HEK293 (cell line): ENCODE measurements at regions of chr2 and their contacts with region 1.

Region 1: DNA sequence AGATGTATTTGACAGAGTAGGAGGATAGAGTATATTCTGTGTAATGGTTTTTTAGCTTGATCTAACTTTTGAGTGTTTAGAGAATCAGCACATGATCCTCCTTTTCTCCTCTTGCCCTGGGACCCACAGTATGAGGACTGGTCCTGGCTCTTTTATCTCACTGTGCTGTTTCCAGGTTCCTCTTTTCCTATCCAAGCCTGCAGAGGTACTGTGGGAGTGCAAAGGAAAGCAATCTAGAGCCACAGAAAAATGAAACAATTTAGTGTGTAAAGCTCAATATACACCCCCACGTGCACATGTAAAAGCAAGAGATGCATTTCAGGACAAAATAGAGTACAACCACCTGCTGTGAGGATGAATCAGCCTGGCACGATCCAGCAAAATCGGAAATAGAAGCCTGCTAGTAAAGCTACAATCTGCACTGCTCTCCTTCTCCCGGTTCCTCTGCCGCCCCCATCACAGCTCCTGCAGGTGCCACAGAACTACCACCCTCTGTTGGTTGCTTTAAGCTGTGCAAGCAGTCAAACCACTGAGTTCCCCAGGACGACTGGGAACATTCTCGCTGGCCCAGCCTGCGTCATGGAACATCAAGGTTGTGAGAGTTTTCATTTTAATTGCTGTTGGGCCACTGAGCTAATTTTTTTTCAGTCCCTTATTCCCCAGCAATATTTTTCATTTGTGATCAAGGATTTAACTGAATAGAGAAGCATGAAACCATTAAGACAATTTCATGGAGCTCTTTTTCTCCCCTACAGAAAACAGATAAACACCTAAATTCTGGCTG is 47.8 kb upstream of the MAPRE3 start:
- H3K4me3 ChIP-seq: no peak overlapping the region
- H3K27ac ChIP-seq: no peak overlapping the region
- H3K4me1 ChIP-seq: peaks cover 5% of the 10 kb centered on the region
- CTCF ChIP-seq: peak; percentile 83

Region 2: DNA sequence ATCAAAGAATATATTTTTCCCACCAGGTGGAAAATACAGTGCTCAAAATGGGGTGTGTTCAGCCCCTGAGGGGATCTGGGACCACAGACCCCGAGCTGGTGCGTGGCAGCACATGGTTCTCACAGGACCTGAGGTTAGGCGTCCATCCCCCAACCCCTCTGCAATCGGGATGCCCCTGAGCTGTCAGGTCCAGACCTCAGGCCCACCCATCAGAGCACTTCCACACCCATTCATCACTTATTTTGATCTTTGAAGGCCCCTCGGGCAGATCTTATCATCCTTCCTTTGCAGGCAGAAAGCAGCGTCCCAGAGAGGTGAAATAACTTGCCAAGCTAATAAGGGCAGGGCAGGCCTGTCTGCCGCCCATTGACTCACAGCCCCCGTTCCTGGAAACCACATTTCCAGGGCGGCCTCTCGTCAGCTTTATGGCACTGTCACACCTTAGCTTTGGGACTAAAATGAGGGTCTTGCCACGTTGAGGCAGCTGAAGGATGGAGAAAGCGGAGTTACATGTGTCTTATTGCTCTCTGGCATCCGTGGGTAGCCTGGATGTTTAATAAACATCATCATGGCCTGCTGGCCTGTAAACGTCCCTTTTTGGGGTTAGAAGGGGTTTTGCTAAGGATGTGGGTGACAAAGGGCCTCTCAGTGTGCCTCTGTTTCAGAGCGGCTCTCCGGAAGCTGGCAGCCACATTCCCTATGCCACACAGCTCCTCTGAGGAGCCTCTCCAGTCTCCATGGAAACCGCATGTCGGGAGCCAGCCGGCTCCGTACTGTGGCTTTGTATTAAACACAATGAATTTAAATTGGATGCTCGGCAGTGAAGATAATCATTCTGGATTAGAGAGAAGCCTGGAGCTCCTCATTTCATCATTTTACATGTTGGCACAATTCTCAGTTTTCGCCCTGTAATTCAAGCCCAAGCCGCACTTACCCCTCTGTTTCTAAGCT is 10.4 kb before region 1 on chr2:
- CTCF ChIA-PET with region 1: interaction called, 28 read pairs
- POLR2A ChIA-PET with region 1: no interaction called
- H3K4me3 ChIP-seq: no peak overlapping the region
- H3K27ac ChIP-seq: no peak overlapping the region
- H3K4me1 ChIP-seq: no peaks in the 10 kb centered on the region
- CTCF ChIP-seq: no peak

Region 3: DNA sequence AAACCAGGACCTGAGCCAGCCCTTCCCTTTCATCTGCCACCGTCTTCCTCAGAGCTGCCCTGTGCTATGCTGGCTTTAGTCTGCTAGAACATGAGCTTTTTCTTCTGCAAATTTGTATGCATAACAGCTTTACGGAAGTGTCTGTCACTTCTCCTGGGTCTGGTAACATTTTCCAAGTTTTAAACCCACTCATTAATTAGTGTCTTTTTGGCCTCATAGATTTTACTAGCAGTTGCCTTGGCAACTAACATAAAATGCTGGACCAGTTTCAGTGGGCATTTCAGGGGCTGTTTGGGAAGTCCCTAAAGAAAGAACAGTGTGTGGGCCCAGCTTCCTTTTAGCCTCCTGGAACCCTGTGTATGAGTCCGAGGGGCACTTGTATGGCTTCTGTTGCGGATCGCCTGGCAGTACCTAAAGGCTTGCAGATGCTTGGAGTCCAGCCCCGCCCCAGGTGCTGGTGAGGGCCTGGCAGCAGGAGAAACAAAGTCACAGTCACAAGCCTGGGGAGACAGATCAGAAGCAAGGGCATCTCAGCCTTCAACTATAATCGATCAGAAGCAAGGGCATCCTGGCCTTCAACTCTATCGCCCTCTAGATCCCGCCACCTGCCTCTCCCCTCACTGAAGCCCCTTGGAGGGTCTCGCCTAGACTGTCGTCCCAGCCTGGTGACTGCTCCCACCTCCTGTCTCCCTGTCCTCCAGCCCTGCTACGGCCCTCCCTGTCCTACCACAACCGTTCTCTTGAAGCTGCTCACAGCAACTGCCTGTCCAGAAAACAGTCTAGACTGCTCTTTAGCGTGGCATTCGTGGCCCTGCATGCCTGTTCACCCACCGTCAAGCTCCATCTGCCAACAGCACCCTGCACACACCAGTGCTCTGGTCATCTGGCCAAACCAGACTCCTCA is 11.1 kb after region 1 on chr2:
- CTCF ChIA-PET with region 1: interaction called, 21 read pairs
- POLR2A ChIA-PET with region 1: no interaction called
- H3K4me3 ChIP-seq: no peak overlapping the region
- H3K27ac ChIP-seq: no peak overlapping the region
- H3K4me1 ChIP-seq: no peaks in the 10 kb centered on the region
- CTCF ChIP-seq: no peak

Region 4: DNA sequence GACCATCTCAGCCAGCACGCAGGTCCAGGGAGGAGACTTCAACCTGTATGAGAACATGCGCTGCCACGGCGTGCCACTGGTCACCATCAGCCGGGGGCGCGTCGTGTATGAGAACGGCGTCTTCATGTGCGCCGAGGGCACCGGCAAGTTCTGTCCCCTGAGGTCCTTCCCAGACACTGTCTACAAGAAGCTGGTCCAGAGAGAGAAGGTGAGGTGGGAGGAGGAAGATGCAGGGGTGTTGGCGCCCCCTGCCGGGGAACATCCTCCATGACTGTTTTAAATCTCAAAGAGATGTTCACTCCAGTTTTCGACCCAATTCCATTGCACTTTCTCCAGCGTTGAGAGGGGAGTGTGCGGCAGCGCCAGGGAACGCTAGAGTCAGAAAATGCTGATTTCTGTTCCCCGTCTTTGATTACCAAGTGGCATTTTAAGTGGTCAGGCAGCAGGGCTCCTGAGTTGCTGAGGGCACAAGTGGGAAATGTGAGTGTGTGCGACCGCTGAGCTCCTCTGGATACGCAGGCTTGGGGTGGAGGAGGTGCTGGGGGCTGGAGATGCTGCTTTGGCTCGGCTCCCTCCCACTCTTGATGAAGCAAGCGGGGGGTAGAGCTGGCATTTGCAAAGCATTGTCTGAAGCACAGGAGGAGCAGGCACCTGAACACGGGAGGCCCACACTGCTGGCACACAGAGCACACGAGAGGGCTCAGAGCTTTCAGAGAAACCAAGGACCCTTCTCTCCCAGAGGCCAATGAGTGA is 20.1 kb after region 1 on chr2:
- CTCF ChIA-PET with region 1: interaction called, 30 read pairs
- POLR2A ChIA-PET with region 1: no interaction called
- H3K4me3 ChIP-seq: no peak overlapping the region
- H3K27ac ChIP-seq: no peak overlapping the region
- H3K4me1 ChIP-seq: no peaks in the 10 kb centered on the region
- CTCF ChIP-seq: peak; percentile 62

Region 5: GRCh38 chr2:26982102-26982742 is 59.6 kb after region 1 on chr2:
- CTCF ChIA-PET with region 1: no interaction called
- POLR2A ChIA-PET with region 1: no interaction called
- H3K4me3 ChIP-seq: no peak overlapping the region
- H3K27ac ChIP-seq: no peak overlapping the region
- H3K4me1 ChIP-seq: peaks cover 5% of the 10 kb centered on the region; the same call in 1 of the 2 replicates
- CTCF ChIP-seq: 0 out of 2 replicates have a peak, but pooled peaks have one; percentile 23

Region 6: DNA sequence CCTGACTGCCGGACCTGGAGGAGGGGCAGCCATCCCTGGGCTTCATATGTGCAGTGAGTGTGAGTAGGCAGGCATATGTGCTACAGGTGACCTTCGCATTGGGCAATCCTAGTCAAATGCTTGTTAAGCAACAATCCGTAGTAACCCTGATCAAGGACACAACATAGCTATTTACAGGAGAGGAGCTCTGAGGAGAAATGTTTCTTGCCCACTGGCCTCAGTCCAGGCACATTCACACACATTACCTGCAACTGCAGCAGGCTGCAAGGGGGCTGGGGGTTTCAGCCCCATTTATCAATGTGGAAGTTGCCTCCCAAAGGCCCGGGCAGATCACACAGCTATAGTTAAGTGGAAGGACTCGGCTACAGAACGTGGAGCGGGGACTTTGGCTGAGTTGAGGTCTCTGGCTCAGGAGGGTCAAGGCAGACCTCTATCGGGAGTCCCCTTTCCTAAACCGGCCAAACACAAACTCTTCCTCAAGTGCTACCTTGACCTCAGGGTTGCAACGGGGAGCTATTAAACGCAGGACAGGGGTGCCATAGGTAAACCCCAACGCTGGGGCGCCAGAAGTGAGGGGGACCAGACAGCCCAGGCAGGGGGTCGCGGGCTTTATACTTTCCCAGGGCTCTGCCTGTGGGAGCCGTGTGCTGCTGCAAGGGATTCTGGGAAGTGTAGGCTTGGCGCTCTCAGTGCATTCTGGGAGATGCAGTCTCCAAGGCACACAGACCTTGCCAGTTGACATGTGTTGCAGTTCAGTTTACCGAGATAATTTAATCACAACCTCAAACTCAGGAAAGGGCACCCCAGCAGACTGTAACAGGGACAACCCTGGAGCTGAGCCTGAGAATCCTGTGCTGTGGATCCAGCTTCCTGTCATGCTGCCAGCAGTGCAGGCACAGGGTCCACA is 173.4 kb after region 1 on chr2:
- CTCF ChIA-PET with region 1: no interaction called
- POLR2A ChIA-PET with region 1: no interaction called
- H3K4me3 ChIP-seq: no peak overlapping the region
- H3K27ac ChIP-seq: 0 out of 2 replicates have a peak overlapping the region, but pooled peaks have one; percentile 8
- H3K4me1 ChIP-seq: no peaks in the 10 kb centered on the region
- CTCF ChIP-seq: no peak